H1 (cell line): ENCODE measurements at regions of chr12 and their contacts with region 1.

Region 1: DNA sequence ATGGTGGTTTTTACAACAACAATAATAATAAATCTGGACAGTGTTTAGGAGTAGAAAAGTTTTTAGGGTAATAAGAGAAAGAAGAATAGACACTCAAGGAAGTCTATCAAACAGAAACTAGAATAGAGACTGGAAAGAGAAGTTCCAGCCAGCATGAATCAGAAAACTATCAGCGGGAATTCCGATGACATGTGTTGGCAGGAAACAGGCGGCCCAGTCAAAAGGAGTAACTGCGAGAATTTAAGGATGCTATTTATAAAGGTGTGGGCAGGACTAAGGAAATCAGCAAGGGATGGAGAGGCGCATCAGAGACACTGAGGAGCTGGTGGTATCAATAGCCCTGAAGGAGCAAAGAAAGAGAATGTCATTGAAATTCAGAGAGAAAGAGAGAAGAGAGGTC is 89.9 kb downstream of the TBX5 start:
- DNase-seq: peak in 1 of 2 experiments; percentile 9
- H3K4me3 ChIP-seq: no peak overlapping the region
- H3K27ac ChIP-seq: no peak overlapping the region
- H3K4me1 ChIP-seq: no peaks in the 10 kb centered on the region
- H3K27me3 ChIP-seq: no peaks in the 10 kb centered on the region; a peak in 3 of 7 replicates
- CTCF ChIP-seq: no peak
- EP300 ChIP-seq: no peak
- POLR2A ChIP-seq: no peak
- RAD21 ChIP-seq: no peak

Region 2: DNA sequence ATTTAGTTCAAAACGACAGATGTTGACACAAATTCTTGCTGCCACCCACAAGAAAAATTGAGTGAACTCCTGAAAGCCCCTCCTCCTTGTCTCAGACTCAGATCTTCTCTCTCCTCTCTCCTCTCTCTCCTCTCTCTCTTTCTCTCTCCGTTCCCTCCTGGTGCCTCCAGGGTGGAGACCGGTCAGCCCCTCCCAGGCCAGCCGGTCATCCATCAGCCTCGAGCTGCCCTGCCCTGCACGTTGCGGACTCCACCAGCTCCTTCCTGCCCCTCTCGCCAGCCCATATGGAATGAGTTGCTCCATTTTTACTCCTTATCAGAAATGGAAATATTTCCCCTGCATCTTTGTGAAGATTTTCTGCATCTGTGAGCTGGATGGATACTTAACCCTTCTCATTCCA is 14.0 kb before region 1 on chr12:
- CTCF ChIA-PET with region 1: interaction called, 18 read pairs
- POLR2A ChIA-PET with region 1: interaction called, 4 read pairs
- DNase-seq: no peak
- H3K4me3 ChIP-seq: no peak overlapping the region
- H3K27ac ChIP-seq: no peak overlapping the region
- H3K4me1 ChIP-seq: peaks cover 0 to 12% (median 5%) of the 10 kb centered on the region in 4 experiments; a peak in 5 of 7 replicates
- H3K27me3 ChIP-seq: no peaks in the 10 kb centered on the region
- CTCF ChIP-seq: no peak
- EP300 ChIP-seq: no peak
- POLR2A ChIP-seq: no peak
- RAD21 ChIP-seq: no peak

Region 3: DNA sequence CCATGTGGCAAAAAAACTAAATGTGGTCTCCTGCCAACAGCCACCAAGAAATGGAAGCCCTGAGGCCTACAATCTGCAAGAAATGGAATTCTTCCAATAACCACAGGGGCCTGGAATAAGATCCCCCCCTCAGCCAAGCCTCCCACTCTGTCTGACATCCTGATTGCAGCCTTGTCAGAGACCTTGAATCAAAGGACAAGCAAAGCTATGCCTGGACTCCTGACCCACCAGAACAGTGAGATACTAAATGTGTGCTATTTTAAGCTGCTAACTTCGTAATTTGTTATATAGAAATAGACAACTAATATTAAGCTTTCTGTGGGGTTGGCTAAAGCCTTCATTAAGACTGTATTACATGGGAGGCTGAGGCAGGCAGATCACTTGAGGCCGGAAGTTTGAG is 12.2 kb after region 1 on chr12:
- CTCF ChIA-PET with region 1: interaction called, 15 read pairs
- POLR2A ChIA-PET with region 1: no interaction called
- DNase-seq: no peak
- H3K4me3 ChIP-seq: no peak overlapping the region
- H3K27ac ChIP-seq: no peak overlapping the region
- H3K4me1 ChIP-seq: no peaks in the 10 kb centered on the region
- H3K27me3 ChIP-seq: no peaks in the 10 kb centered on the region
- CTCF ChIP-seq: no peak
- EP300 ChIP-seq: no peak
- POLR2A ChIP-seq: no peak
- RAD21 ChIP-seq: no peak

Region 4: DNA sequence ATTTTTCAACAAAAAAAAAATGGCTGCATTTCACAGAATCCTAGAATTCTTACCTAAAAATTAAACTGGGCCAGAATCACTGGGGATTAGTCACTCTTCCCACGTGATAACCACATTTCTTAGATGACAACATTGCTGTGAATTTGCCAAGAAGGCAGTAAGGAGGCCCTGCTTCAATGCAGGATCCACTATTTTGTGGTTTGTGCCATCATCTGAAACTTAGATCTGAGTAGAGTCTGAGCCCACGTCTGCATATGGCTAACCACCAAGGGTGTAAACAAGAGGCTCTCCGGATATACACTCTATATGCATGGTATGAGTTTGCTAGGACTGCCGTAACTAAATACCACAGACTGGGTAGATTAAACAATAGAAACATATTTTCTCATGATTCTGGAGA is 114.2 kb after region 1 on chr12:
- CTCF ChIA-PET with region 1: no interaction called
- POLR2A ChIA-PET with region 1: no interaction called
- DNase-seq: no peak
- H3K4me3 ChIP-seq: no peak overlapping the region
- H3K27ac ChIP-seq: no peak overlapping the region
- H3K4me1 ChIP-seq: peaks cover 0 to 5% (median 0%) of the 10 kb centered on the region in 4 experiments; a peak in 1 of 7 replicates
- H3K27me3 ChIP-seq: peaks cover 0 to 9% (median 3%) of the 10 kb centered on the region in 4 experiments; a peak in 3 of 7 replicates
- CTCF ChIP-seq: no peak
- EP300 ChIP-seq: no peak
- POLR2A ChIP-seq: no peak
- RAD21 ChIP-seq: no peak